ENCODE measurements at regions of chr3 and their contacts with region 1.

Region 1: GRCh38 chr3:173660645-173661615 is 263.4 kb downstream of the NLGN1 start:
- DNase-seq: no peak
- ATAC-seq: peak; percentile 46

Region 2: DNA sequence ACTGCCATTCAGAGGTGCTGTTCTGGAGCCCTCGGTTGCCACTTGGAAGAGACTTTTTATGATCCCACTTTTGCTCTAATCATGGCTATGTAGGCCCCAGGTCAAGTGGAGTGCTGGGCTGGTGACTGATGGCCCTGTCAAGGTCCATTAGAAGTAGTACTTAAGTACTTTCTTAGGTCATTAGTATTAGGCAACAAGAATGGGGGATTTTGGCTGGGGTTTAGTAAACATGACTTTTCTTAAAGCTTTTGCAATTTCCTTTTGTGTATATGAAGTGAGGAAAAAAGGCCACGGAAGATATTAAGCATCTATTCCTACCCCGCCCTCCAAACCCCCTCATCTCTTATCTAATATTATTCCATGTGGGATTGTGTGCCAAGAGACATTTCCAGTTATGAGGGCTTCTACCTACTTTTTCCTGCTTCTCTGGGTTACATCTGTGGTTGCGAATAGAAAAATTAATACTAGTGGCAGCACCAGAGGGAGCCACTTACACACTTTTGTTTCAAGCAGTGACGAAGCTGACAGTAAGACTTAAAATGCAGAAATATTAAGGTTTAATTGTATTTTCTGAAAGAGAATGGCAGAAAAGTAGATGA is 249.5 kb before region 1 on chr3:
- intact Hi-C with region 1: no loop called
- DNase-seq: no peak
- ATAC-seq: peak; percentile 73

Region 3: GRCh38 chr3:173617490-173617889 is 43.4 kb before region 1 on chr3:
- intact Hi-C with region 1: loop called (anchors 5 kb)
- DNase-seq: no peak
- ATAC-seq: peak; percentile 88

Measured in Right ventricle myocardium inferior (tissue), 1 donor.